Activated B cell treated with CpG ODN at 0.5 μM for 24 hours (primary cell): ENCODE measurements at regions of chr17 and their contacts with region 1.

Region 1: GRCh38 chr17:9200699-9201359 is 179.5 kb downstream of the NTN1 start:
- DNase-seq: no peak
- ATAC-seq: peak; percentile 82
- H3K4me3 Mint-ChIP-seq: peak overlapping the region; percentile 24
- H3K27ac Mint-ChIP-seq: peak overlapping the region; percentile 85
- H3K4me1 Mint-ChIP-seq: peaks cover 51% of the 10 kb centered on the region
- H3K27me3 Mint-ChIP-seq: no peaks in the 10 kb centered on the region
- CTCF ChIP-seq: no peak

Region 2: DNA sequence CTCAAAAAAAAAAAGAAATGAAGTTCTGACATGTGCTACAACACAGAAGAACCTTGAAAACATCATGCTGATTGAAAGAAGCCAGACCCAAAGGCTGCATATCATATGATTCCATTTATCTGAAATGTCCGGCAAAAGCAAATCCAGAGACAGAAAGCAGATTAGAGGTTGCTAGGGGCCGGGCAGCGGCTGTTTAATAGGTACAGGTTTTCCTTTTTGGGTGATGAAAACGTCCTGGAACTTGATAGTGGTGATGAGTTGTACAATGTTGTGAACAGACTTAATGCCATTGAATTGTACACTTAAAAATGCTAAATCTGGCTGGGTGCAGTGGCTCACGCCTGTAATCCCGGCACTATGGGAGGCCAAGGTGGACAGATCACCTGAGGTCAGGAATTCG is 13.0 kb before region 1 on chr17:
- CTCF ChIA-PET with region 1: no interaction called
- POLR2A ChIA-PET with region 1: interaction called, 10 read pairs
- intact Hi-C with region 1: no loop called
- DNase-seq: no peak
- ATAC-seq: no peak
- H3K4me3 Mint-ChIP-seq: no peak overlapping the region
- H3K27ac Mint-ChIP-seq: no peak overlapping the region
- H3K4me1 Mint-ChIP-seq: peaks cover 2% of the 10 kb centered on the region
- H3K27me3 Mint-ChIP-seq: peaks cover 15% of the 10 kb centered on the region
- CTCF ChIP-seq: no peak

Region 3: DNA sequence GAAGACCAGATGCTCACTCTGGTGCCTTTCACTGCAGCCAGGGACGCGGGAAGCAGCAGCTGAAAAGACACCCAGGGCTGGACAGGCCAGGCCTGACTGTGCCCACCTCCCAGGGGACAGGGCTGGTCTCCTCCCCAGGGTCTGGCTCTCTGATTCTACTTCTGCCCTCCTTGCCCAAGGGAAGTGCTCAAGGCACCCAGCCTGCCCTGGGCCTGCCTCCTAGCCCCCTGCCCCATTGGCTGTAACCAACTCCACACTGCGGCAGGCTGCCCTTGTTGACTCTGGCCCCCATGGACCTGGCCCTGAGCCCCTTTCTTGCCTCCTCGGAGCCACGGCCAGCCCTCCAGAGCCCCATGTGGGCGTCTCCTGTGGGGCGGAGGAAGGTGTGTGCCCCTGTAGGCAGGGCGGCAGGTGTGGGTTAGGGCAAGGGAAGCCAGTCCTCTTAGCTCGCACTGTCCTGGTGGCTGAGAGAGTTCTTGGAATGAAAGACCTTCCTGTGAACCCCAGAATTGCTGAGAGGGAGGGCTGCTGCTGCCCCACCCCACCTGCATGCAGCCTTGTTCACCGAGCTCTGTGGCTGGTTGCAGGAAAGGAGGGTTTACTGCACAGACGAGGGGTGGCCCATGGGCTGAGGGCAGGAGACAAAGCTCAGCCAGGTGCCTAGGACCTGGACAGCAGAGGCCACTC is 33.1 kb after region 1 on chr17:
- CTCF ChIA-PET with region 1: no interaction called
- POLR2A ChIA-PET with region 1: interaction called, 14 read pairs
- intact Hi-C with region 1: loop called (anchors 5 kb)
- DNase-seq: no peak
- ATAC-seq: no peak
- H3K4me3 Mint-ChIP-seq: no peak overlapping the region
- H3K27ac Mint-ChIP-seq: no peak overlapping the region
- H3K4me1 Mint-ChIP-seq: peaks cover 6% of the 10 kb centered on the region
- H3K27me3 Mint-ChIP-seq: peaks cover 7% of the 10 kb centered on the region
- CTCF ChIP-seq: no peak

Region 4: GRCh38 chr17:9239793-9240658 is 39.2 kb after region 1 on chr17:
- CTCF ChIA-PET with region 1: no interaction called
- POLR2A ChIA-PET with region 1: no interaction called
- intact Hi-C with region 1: loop called (anchors 5 kb)
- DNase-seq: peak; percentile 75
- ATAC-seq: peak; percentile 86
- H3K4me3 Mint-ChIP-seq: peak overlapping the region; percentile 82
- H3K27ac Mint-ChIP-seq: peak overlapping the region; percentile 53
- H3K4me1 Mint-ChIP-seq: peaks cover 15% of the 10 kb centered on the region
- H3K27me3 Mint-ChIP-seq: no peaks in the 10 kb centered on the region
- CTCF ChIP-seq: no peak